Activated CD8-positive, alpha-beta T cell treated with anti-CD3 and anti-CD28 coated beads for 36 hours (primary cell): ENCODE measurements at regions of chr17 and their contacts with region 1.

Region 1: GRCh38 chr17:31373150-31374093 is 18.1 kb upstream of the RAB11FIP4 start:
- DNase-seq: peak; percentile 38
- ATAC-seq: peak; percentile 79
- H3K4me3 Mint-ChIP-seq: no peak overlapping the region
- H3K27ac Mint-ChIP-seq: no peak overlapping the region
- H3K4me1 Mint-ChIP-seq: peaks cover 22% of the 10 kb centered on the region
- H3K27me3 Mint-ChIP-seq: no peaks in the 10 kb centered on the region
- CTCF ChIP-seq: peak; percentile 77

Region 2: DNA sequence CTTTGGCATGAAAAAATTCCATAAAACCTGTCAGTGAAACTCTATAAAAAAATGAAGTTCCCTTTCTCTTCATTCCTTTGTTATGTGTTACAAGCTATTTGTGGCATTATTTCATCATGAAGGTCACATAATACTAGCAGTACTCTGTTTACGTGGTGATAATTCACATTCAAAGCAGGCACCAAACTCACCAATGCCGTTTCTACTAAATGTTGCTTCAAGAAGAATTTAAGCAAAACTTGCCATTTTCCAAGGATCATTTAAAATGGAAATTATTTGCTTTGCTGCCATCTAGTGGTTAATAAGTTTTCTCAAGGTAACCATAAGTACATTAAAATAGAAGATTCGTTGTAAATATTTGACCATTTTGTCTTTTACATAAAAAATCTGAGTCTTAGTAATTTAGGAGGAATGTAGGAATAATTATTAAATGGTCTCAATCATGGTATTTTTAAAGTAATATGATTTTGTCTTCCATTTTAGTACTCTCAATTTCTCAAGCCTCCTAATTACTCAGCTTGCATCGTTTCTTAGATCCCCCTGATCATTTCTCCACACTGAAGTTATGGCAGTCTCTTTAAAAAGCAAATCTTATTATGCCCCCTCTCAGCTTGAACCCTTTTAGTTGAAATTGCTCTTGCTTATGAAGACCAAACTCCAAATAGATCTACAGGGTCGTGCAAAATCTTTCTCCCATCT is 157.2 kb before region 1 on chr17:
- CTCF ChIA-PET with region 1: interaction called, 18 read pairs
- POLR2A ChIA-PET with region 1: no interaction called
- intact Hi-C with region 1: no loop called
- DNase-seq: no peak
- ATAC-seq: no peak
- H3K4me3 Mint-ChIP-seq: no peak overlapping the region
- H3K27ac Mint-ChIP-seq: no peak overlapping the region
- H3K4me1 Mint-ChIP-seq: no peaks in the 10 kb centered on the region
- H3K27me3 Mint-ChIP-seq: no peaks in the 10 kb centered on the region
- CTCF ChIP-seq: peak; percentile 66

Region 3: DNA sequence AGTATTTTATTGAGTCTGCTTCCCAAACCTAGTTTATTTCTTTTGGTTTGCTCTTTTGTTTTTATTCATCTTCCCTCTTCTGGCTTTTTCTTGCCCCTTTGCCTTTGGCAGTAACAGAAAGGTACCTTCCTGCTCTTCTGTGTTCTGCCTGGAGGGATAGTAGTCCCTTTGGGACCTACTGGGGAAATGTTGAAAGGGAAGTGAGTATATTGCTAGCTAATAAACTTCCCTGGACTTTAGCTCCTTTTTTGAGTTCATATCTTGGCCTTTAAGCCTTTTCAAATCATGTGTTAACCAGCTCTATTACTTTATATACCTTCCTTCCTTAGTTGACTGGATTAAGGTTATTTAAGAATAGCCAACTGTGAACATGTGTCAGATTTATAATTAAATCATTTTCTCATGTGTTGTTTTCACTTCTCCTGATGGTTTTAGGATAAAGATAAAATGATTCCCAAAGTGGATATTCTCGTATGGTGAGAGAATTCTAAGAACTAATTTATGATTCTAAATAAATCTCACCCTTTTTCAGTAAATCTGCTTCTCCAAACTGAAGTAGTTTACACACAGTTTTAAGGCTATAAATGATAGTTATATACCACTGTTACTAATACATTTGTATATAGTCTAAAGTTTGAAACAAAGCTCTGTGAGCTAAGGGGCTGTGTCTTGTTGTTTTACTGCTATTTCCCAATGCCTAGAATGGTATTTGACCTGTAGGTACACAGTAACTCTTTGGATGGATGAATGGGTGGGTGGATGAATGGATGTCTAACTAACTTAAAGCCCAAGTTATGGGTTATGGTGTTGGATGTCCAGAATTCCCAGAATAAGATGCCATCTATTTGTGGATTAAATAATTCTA is 122.1 kb before region 1 on chr17:
- CTCF ChIA-PET with region 1: interaction called, 10 read pairs
- POLR2A ChIA-PET with region 1: interaction called, 3 read pairs
- intact Hi-C with region 1: no loop called
- DNase-seq: no peak
- ATAC-seq: no peak
- H3K4me3 Mint-ChIP-seq: no peak overlapping the region
- H3K27ac Mint-ChIP-seq: no peak overlapping the region
- H3K4me1 Mint-ChIP-seq: peaks cover 4% of the 10 kb centered on the region
- H3K27me3 Mint-ChIP-seq: no peaks in the 10 kb centered on the region
- CTCF ChIP-seq: no peak

Region 4: DNA sequence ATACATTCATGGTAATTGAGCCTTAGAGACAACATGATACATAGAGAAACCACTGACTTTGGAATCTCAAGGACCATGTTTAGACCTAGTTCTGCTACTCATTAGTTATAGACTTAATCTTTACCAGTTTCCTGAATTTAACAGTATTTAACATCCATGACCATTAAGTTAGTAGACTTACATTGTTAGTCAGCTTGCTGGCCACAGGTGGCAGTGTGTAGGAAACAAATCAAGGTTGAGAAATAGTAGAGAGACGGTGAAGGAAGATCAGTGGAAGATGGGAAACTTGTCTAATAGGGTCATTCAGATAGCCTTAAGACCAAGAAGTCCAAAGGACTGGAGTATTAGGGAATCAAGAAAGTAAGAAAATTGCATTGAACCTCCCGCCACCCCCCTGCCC is 107.4 kb before region 1 on chr17:
- CTCF ChIA-PET with region 1: interaction called, 14 read pairs
- POLR2A ChIA-PET with region 1: no interaction called
- intact Hi-C with region 1: no loop called
- DNase-seq: no peak
- ATAC-seq: no peak
- H3K4me3 Mint-ChIP-seq: no peak overlapping the region
- H3K27ac Mint-ChIP-seq: no peak overlapping the region
- H3K4me1 Mint-ChIP-seq: no peaks in the 10 kb centered on the region
- H3K27me3 Mint-ChIP-seq: no peaks in the 10 kb centered on the region
- CTCF ChIP-seq: no peak

Region 5: GRCh38 chr17:31388770-31389661 is 15.6 kb after region 1 on chr17:
- CTCF ChIA-PET with region 1: interaction called, 11 read pairs
- POLR2A ChIA-PET with region 1: interaction called, 3 read pairs
- intact Hi-C with region 1: no loop called
- DNase-seq: peak; percentile 59
- ATAC-seq: peak; percentile 69
- H3K4me3 Mint-ChIP-seq: no peak overlapping the region
- H3K27ac Mint-ChIP-seq: no peak overlapping the region
- H3K4me1 Mint-ChIP-seq: peaks cover 5% of the 10 kb centered on the region
- H3K27me3 Mint-ChIP-seq: peaks cover 38% of the 10 kb centered on the region
- CTCF ChIP-seq: peak; percentile 87

Region 6: GRCh38 chr17:31494259-31495021 is 121.0 kb after region 1 on chr17:
- CTCF ChIA-PET with region 1: no interaction called
- POLR2A ChIA-PET with region 1: no interaction called
- intact Hi-C with region 1: no loop called
- DNase-seq: peak; percentile 86
- ATAC-seq: peak; percentile 73
- H3K4me3 Mint-ChIP-seq: peak overlapping the region; percentile 69
- H3K27ac Mint-ChIP-seq: peak overlapping the region; percentile 97
- H3K4me1 Mint-ChIP-seq: peaks cover 94% of the 10 kb centered on the region
- H3K27me3 Mint-ChIP-seq: no peaks in the 10 kb centered on the region
- CTCF ChIP-seq: no peak

Region 7: GRCh38 chr17:31877911-31878702 is 504.7 kb after region 1 on chr17:
- CTCF ChIA-PET with region 1: no interaction called
- POLR2A ChIA-PET with region 1: no interaction called
- intact Hi-C with region 1: no loop called
- DNase-seq: peak; percentile 83
- ATAC-seq: peak; percentile 89
- H3K4me3 Mint-ChIP-seq: peak overlapping the region; percentile 5
- H3K27ac Mint-ChIP-seq: peak overlapping the region; percentile 90
- H3K4me1 Mint-ChIP-seq: peaks cover 29% of the 10 kb centered on the region
- H3K27me3 Mint-ChIP-seq: no peaks in the 10 kb centered on the region
- CTCF ChIP-seq: no peak